ENCODE measurements at regions of chr13 and their contacts with region 1.

Region 1: DNA sequence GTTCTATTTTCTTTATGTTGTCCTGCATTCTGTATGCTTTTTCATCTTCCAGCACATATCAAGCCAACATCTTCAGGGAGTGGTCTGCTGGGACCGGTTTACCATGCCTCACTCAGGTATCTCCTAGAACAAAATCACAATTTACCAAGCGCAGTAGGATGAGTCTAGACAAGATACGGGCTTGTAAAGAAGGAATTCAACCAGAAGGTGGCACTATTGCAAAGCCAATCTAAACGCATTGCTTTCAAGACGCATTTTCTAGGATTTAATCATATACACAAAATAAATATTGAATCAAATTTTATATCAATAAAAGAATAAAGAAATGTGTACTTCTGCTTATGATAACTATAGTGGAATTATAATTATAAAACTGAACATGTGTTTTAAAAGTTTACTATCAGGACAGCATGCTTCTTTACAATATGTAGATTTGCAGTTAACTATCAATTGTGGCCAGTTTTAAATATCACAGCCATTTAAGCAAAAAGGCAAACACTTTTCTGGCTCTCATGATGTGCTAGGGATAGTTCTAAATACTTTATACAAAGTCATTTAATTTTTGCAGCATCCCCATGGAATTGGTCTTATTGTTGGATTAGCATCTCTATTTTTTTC is 16.1 kb upstream of the TPP2 start:
- DNase-seq: peak; percentile 54
- H3K4me3 ChIP-seq: no peak overlapping the region; a peak in 1 of 4 replicates
- H3K27ac ChIP-seq: no peak overlapping the region
- H3K4me1 ChIP-seq: no peaks in the 10 kb centered on the region
- H3K27me3 ChIP-seq: no peaks in the 10 kb centered on the region
- CTCF ChIP-seq: peak; percentile 84
- EP300 ChIP-seq: no peak
- RAD21 ChIP-seq: peak; percentile 92

Region 2: DNA sequence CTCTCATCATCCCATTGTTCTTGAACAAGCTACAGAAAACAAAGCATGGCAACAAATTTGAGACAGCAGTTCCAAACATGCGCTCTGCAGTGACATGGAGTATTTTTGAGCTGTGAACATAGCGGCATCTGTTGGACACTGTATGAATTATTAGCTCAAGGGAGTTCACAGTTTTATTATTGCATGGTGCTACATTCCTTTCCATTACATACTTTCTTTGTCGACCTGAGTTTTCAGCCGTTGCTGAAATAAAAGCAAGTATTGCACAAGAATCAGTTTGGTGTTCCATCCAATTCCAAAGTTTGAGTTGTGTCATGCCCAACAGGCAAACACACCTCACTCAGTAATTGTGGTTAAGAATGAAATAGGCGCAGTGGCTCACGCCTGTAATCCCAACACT is 144.3 kb after region 1 on chr13:
- CTCF ChIA-PET with region 1: interaction called, 19 read pairs
- POLR2A ChIA-PET with region 1: no interaction called
- DNase-seq: peak; percentile 29
- H3K4me3 ChIP-seq: no peak overlapping the region
- H3K27ac ChIP-seq: no peak overlapping the region
- H3K4me1 ChIP-seq: no peaks in the 10 kb centered on the region; a peak in 1 of 4 replicates
- H3K27me3 ChIP-seq: no peaks in the 10 kb centered on the region
- CTCF ChIP-seq: peak; percentile 67
- EP300 ChIP-seq: no peak
- RAD21 ChIP-seq: peak; percentile 85

Region 3: DNA sequence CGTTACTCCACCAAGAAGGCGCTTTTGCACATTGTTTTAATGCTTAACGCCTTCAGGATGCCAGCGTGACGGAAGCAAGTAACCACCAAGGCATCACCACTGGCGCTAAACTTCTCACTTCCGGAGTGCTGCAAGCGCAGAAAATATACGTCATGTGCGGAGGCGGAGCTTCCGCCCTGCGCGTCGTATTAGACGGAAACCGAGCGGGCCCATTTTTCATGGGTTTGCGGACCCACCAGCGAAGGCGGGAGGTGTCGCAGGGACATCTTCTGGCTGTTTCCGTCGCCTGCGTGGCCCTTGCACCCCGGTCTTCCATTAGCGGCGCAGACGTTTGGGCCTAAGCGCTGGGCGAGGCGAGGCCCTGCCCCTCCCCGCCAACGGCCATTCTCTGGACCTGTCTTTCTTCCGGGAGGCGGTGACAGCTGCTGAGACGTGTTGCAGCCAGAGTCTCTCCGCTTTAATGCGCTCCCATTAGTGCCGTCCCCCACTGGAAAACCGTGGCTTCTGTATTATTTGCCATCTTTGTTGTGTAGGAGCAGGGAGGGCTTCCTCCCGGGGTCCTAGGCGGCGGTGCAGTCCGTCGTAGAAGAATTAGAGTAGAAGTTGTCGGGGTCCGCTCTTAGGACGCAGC is 265.1 kb after region 1 on chr13 and contains the start of gene ERCC5:
- CTCF ChIA-PET with region 1: interaction called, 70 read pairs
- POLR2A ChIA-PET with region 1: no interaction called
- DNase-seq: peak; percentile 81
- H3K4me3 ChIP-seq: peak within 1 kb of the TSS; percentile 96 to 99
- H3K27ac ChIP-seq: peak within 1 kb of the TSS; percentile 87 to 96
- H3K4me1 ChIP-seq: peaks cover 0 to 12% of the 10 kb centered on the region in 2 experiments; a peak in 3 of 4 replicates
- H3K27me3 ChIP-seq: no peaks in the 10 kb centered on the region
- CTCF ChIP-seq: no peak
- EP300 ChIP-seq: peak; percentile 31 to 45; a peak in 1 of 4 replicates
- RAD21 ChIP-seq: peak; percentile 27; the same call in 1 of the 2 replicates
- polyA plus RNA-seq, gene ERCC5: 14.1 and 19.0 TPM in 2 replicates